T-cell (primary cell): ENCODE measurements at regions of chr19 and their contacts with region 1.

Region 1: DNA sequence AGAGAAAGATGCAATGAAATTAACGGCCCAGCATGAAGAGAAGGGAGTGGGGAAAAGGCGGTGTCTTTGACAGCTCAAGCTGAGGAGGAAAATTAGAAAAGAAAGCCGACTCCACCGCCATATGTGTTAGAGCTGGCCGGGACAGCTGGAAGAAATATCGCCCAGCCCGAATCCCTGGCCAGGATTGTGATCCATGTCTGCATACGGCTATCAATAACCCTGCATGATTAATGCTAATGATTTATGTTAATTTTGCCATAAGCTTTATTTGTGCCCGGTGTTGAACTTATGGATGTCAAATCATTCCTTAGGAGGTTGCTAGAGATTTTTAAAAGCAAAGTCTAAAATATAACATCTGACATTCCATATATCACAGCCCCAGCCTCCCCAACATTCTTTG is 263.4 kb upstream of the ZNF507 start:
- DNase-seq: no peak
- ATAC-seq: no peak
- H3K4me3 ChIP-seq: no peak overlapping the region
- H3K4me3 Mint-ChIP-seq: no peak overlapping the region
- H3K27ac ChIP-seq: no peak overlapping the region
- H3K27ac Mint-ChIP-seq: no peak overlapping the region
- H3K4me1 ChIP-seq: no peaks in the 10 kb centered on the region
- H3K4me1 Mint-ChIP-seq: no peaks in the 10 kb centered on the region
- H3K27me3 ChIP-seq: peaks cover 0 to 6% of the 10 kb centered on the region in 2 experiments
- H3K27me3 Mint-ChIP-seq: peaks cover 4 to 5% of the 10 kb centered on the region in 2 donors

Region 2: GRCh38 chr19:31890218-31890617 is 191.8 kb before region 1 on chr19:
- CTCF ChIA-PET with region 1: no interaction called
- POLR2A ChIA-PET with region 1: interaction called in 1 of 2 experiments, 10 read pairs
- DNase-seq: no peak
- ATAC-seq: no peak
- H3K4me3 ChIP-seq: no peak overlapping the region
- H3K4me3 Mint-ChIP-seq: no peak overlapping the region
- H3K27ac ChIP-seq: no peak overlapping the region
- H3K27ac Mint-ChIP-seq: no peak overlapping the region
- H3K4me1 ChIP-seq: no peaks in the 10 kb centered on the region
- H3K4me1 Mint-ChIP-seq: no peaks in the 10 kb centered on the region
- H3K27me3 ChIP-seq: peaks cover 0 to 6% of the 10 kb centered on the region in 2 experiments
- H3K27me3 Mint-ChIP-seq: no peaks in the 10 kb centered on the region